Panc1 (cell line): ENCODE measurements at regions of chr14 and their contacts with region 1.

Region 1: DNA sequence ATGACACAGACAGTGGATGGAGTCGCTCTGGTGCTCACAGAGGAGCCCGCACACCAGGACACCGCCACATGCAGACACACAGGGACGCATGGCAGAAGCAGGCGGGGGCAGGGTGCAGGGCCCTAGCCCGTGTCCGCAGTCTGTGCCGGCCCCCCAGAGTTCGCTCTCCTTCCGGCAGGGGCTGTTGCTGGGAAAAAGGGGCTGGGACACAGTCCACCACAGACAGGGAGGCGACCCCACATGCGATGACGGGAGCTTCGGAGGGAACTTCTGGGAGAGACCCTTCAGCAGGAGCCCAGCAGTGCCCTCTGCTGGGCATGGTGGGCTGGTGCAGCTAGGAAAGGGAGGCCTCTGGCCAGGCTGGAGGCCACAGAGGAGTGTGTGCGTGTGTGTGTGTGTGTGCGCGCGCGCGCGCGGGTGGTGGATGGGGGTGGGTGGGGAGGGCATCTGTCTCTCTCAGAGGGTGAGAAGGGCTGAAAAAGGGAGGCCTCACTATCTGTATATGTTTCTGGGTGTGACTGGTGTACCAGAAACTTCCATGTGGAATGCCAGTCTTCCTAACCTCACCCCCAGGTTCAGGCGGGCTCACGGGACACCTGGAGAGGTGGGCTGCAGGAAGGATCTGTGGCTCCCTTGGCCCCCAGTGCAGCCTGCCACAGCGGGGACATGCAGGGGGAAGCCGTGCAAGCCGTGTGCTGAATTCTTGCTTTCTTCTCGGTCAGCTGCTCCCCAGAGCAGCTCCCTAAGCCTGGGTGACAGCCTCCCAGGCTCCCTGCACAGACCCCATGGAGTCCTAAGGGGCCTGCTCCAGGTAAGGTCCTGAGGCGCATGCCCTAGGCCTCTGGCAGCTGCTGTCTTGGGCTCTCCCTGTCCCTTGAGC is 60.7 kb downstream of the PLEKHG3 start:
- DNase-seq: peak; percentile 60
- ATAC-seq: peak; percentile 83
- H3K4me3 ChIP-seq: peak overlapping the region; percentile 22 to 51
- H3K27ac ChIP-seq: 0 out of 2 replicates have a peak overlapping the region, but pooled peaks have one; percentile 34
- H3K4me1 ChIP-seq: peaks cover 3% of the 10 kb centered on the region; the same call in 1 of the 2 replicates
- H3K27me3 ChIP-seq: no peaks in the 10 kb centered on the region
- CTCF ChIP-seq: peak; percentile 88

Region 2: GRCh38 chr14:64671591-64671990 is 93.3 kb before region 1 on chr14:
- CTCF ChIA-PET with region 1: interaction called, 5 read pairs
- POLR2A ChIA-PET with region 1: no interaction called
- in situ Hi-C with region 1: no loop called
- intact Hi-C with region 1: loop called (anchors 1 kb)
- DNase-seq: peak; percentile 25
- ATAC-seq: peak; percentile 77; the same call in 1 of the 2 replicates
- H3K4me3 ChIP-seq: no peak overlapping the region
- H3K27ac ChIP-seq: no peak overlapping the region
- H3K4me1 ChIP-seq: no peaks in the 10 kb centered on the region
- H3K27me3 ChIP-seq: no peaks in the 10 kb centered on the region
- CTCF ChIP-seq: no peak

Region 3: DNA sequence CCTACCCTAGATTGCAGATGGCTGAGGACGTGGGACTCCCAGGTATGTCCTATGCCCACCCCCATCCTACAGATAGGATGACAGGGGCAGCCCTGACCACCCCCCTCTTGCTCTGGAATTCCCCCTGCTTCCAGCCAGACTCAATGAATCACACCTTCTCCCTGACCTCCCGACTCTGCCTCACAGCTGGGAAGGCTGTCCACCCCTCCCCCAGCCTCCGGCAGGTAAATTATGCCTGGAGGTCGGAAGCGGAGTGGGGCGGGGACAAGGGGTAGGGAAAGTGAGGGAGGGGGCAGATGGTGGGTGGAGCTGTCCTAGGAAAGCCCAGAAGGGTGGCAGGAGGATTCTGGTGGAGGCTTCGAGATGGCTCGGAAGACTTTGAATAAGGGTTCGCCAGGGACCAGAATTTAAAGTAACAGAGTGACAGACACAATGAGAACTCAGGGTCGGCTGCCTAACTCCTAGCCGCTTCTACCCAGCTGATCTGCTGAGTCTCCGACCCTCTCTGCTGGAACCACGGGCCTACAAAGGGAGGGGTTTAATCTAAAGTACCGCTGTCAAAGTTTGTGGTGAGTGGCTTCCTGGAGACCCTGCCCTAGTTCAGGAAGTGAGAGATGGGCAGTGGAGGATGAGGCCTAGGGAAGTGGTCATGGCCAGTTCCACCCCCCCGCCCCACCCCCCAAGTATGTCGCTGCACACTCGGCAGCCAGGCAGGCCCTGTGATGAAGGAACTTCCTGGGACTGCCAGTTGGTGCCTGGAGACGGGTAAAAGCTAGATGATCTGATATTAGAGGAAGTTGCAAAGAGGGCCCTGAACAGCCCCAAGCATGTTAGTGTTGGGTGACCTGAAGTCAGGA is 56.5 kb before region 1 on chr14:
- CTCF ChIA-PET with region 1: interaction called, 3 read pairs
- POLR2A ChIA-PET with region 1: no interaction called
- in situ Hi-C with region 1: no loop called
- intact Hi-C with region 1: loop called (anchors 5 kb)
- DNase-seq: no peak
- ATAC-seq: peak; percentile 54
- H3K4me3 ChIP-seq: peak overlapping the region in 1 of 2 experiments; percentile 36; a peak in 2 of 4 replicates
- H3K27ac ChIP-seq: peak overlapping the region; percentile 72
- H3K4me1 ChIP-seq: peaks cover 43% of the 10 kb centered on the region
- H3K27me3 ChIP-seq: no peaks in the 10 kb centered on the region
- CTCF ChIP-seq: no peak

Region 4: GRCh38 chr14:64748995-64749763 is 15.7 kb before region 1 on chr14:
- CTCF ChIA-PET with region 1: no interaction called
- POLR2A ChIA-PET with region 1: no interaction called
- in situ Hi-C with region 1: no loop called
- intact Hi-C with region 1: no loop called
- DNase-seq: no peak
- ATAC-seq: no peak
- H3K4me3 ChIP-seq: no peak overlapping the region
- H3K27ac ChIP-seq: no peak overlapping the region
- H3K4me1 ChIP-seq: no peaks in the 10 kb centered on the region
- H3K27me3 ChIP-seq: no peaks in the 10 kb centered on the region
- CTCF ChIP-seq: no peak

Region 5: GRCh38 chr14:64879635-64880220 is 114.8 kb after region 1 on chr14 and contains the start of gene SPTB:
- CTCF ChIA-PET with region 1: no interaction called
- POLR2A ChIA-PET with region 1: no interaction called
- in situ Hi-C with region 1: no loop called
- intact Hi-C with region 1: no loop called
- DNase-seq: no peak
- ATAC-seq: peak; percentile 64
- H3K4me3 ChIP-seq: peak within 1 kb of the TSS; percentile 24 to 37
- H3K27ac ChIP-seq: no peak within 1 kb of the TSS
- H3K4me1 ChIP-seq: no peaks in the 10 kb centered on the region
- H3K27me3 ChIP-seq: peaks cover 44% of the 10 kb centered on the region
- CTCF ChIP-seq: no peak
- total RNA-seq, gene SPTB: 0.13 TPM